Activated B cell treated with CpG ODN at 0.5 μM for 24 hours (primary cell): ENCODE measurements at regions of chr12 and their contacts with region 1.

Region 1: GRCh38 chr12:26274441-26275312 is 79.3 kb downstream of the SSPN start:
- DNase-seq: peak; percentile 43
- ATAC-seq: peak; percentile 98
- H3K4me3 Mint-ChIP-seq: peak overlapping the region; percentile 28
- H3K27ac Mint-ChIP-seq: peak overlapping the region; percentile 78
- H3K4me1 Mint-ChIP-seq: peaks cover 53% of the 10 kb centered on the region
- H3K27me3 Mint-ChIP-seq: no peaks in the 10 kb centered on the region
- CTCF ChIP-seq: no peak

Region 2: DNA sequence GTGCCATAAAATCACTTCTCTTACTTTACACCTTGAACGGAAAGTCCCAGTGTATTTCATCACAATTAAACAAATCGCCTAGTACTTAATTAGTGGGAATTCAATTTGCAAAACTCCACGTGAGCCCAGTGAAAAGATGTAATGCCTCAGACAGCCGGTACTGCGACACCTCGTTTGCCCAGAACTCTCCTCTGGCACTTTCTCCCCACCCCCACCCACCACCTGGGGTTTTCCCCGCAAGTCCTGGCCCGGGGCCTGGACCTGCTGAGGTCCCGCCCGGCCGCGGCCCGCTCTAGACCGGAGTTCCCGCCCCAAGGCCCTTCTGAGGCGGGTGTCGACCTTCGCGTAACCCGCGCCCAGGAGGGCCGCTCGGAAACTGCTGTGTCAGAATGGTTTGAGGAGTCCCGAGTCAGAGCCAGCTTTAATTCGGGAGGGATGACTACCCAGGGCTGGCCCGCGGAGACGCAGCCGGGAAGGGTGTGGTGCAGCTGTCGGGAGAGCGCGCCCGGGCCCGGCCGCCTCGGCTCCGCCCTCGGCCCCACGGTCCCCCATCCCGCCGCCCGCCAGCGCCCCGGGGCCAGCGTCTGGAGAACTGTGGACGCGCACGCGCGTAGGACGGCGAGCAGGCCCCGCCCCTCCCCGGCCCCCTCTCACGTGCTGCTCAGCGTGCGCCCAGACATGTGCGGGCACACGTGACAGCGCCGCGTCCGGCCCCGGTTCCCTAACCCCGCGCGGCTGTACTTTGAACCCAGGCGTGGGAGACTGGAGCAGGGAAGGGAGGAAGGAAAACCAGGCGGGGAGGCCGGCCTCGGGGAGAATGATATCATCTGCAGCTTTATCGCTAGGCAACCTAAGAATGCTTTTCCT is 160.6 kb before region 1 on chr12:
- CTCF ChIA-PET with region 1: interaction called, 4 read pairs
- POLR2A ChIA-PET with region 1: no interaction called
- intact Hi-C with region 1: loop called (anchors 1 kb)
- DNase-seq: peak; percentile 77
- ATAC-seq: peak; percentile 80
- H3K4me3 Mint-ChIP-seq: peak overlapping the region; percentile 85
- H3K27ac Mint-ChIP-seq: peak overlapping the region; percentile 92
- H3K4me1 Mint-ChIP-seq: peaks cover 58% of the 10 kb centered on the region
- H3K27me3 Mint-ChIP-seq: no peaks in the 10 kb centered on the region
- CTCF ChIP-seq: no peak

Region 3: DNA sequence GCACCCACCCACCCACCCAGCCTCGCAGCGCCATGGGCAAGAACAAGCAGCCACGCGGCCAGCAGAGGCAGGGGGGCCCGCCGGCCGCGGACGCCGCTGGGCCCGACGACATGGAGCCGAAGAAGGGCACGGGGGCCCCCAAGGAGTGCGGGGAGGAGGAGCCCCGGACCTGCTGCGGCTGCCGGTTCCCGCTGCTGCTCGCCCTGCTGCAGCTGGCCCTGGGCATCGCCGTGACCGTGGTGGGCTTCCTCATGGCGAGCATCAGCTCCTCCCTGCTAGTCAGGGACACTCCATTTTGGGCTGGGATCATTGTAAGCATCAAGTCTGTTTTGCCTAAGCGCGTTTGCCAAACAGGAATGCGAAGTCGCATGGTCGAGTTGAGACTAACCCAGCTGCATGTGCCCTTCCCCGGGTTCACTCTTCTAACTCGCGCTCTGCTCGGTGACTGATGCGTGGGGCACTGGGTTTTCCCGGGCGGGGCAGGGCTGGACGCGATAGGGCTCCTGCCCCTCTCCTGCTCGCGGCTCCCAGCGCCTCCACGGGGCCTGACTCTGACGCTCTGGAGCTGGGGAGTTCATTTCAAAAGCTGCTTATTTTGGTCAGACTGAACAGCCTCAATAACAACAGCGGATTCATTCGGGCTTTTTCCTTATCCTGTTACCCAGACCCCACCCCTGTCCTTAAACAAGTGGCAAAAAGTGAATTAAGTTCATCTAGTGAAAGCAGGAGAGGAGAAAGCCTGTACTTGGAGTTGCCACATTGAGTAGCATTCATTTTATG is 78.8 kb before region 1 on chr12:
- CTCF ChIA-PET with region 1: no interaction called
- POLR2A ChIA-PET with region 1: no interaction called
- intact Hi-C with region 1: loop called (anchors 5 kb)
- DNase-seq: peak; percentile 46
- ATAC-seq: peak; percentile 82
- H3K4me3 Mint-ChIP-seq: peak overlapping the region; percentile 94
- H3K27ac Mint-ChIP-seq: peak overlapping the region; percentile 87
- H3K4me1 Mint-ChIP-seq: peaks cover 13% of the 10 kb centered on the region
- H3K27me3 Mint-ChIP-seq: no peaks in the 10 kb centered on the region
- CTCF ChIP-seq: no peak

Region 4: GRCh38 chr12:26226629-26227360 is 47.9 kb before region 1 on chr12:
- CTCF ChIA-PET with region 1: no interaction called
- POLR2A ChIA-PET with region 1: no interaction called
- intact Hi-C with region 1: no loop called
- DNase-seq: peak; percentile 19
- ATAC-seq: peak; percentile 58
- H3K4me3 Mint-ChIP-seq: peak overlapping the region; percentile 78
- H3K27ac Mint-ChIP-seq: no peak overlapping the region
- H3K4me1 Mint-ChIP-seq: peaks cover 12% of the 10 kb centered on the region
- H3K27me3 Mint-ChIP-seq: peaks cover 3% of the 10 kb centered on the region
- CTCF ChIP-seq: no peak

Region 5: DNA sequence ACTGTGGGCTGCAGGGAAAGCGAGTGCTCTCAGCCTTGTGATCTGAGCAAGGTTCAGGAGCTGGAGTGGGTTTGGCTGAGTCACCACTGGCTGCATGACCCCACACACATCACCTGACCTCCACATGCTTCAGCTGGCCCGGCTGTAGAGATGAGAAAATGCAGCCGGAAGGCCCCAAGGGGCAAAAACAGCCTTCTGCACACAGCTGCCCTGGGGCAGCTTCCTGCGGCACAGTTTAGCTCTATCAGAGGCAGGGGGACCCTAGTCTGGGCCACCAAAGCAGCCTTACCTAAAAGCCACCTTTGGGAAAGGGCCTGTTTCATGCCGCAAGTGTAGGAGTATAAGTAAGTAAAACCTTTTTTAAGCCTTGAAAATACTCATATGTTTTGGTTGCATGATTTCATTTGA is 44.0 kb after region 1 on chr12:
- CTCF ChIA-PET with region 1: interaction called, 3 read pairs
- POLR2A ChIA-PET with region 1: interaction called, 10 read pairs
- intact Hi-C with region 1: loop called (anchors 1 kb)
- DNase-seq: peak; percentile 50
- ATAC-seq: peak; percentile 85
- H3K4me3 Mint-ChIP-seq: peak overlapping the region; percentile 11
- H3K27ac Mint-ChIP-seq: peak overlapping the region; percentile 83
- H3K4me1 Mint-ChIP-seq: peaks cover 39% of the 10 kb centered on the region
- H3K27me3 Mint-ChIP-seq: no peaks in the 10 kb centered on the region
- CTCF ChIP-seq: no peak

Region 6: GRCh38 chr12:26599096-26599695 is 324.5 kb after region 1 on chr12:
- CTCF ChIA-PET with region 1: no interaction called
- POLR2A ChIA-PET with region 1: no interaction called
- intact Hi-C with region 1: no loop called
- DNase-seq: no peak
- ATAC-seq: no peak
- H3K4me3 Mint-ChIP-seq: no peak overlapping the region
- H3K27ac Mint-ChIP-seq: no peak overlapping the region
- H3K4me1 Mint-ChIP-seq: no peaks in the 10 kb centered on the region
- H3K27me3 Mint-ChIP-seq: no peaks in the 10 kb centered on the region
- CTCF ChIP-seq: no peak